Sciatic nerve (tissue), 2 donors: ENCODE measurements at regions of chr13 and their contacts with region 1.

Region 1: DNA sequence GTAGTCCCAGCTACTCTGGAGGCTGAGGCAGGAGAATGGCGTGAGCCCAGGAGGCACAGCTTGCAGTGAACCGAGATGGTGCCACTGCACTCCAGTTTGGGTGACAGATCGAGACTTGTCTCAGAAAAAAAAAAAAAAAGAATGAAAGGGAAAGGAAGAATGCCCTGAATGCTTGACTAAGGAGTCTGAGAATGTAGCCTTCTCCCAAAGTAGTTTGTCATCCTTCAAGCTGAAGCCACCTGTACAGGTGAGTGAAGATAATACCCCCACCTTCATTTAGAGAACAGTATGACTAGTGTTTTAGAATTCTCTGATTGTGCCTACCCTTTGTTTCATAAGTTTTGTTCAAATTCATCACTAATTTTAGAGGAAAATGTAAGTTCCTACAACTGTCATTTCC is 5.9 kb downstream of the RCBTB1 start:
- DNase-seq: no peak
- ATAC-seq: no peak

Region 2: GRCh38 chr13:49536144-49536873 is 43.2 kb before region 1 on chr13:
- intact Hi-C with region 1: loop called (anchors 2 kb)
- DNase-seq: no peak
- ATAC-seq: peak; percentile 59